ENCODE measurements at regions of chr16 and their contacts with region 1.

Region 1: GRCh38 chr16:75110637-75111513 is 5.7 kb downstream of the LDHD start:
- DNase-seq: peak; percentile 79 to 84 (median 80)
- H3K4me3 ChIP-seq: peak overlapping the region; percentile 5 to 39
- H3K4me3 Mint-ChIP-seq: peak overlapping the region; percentile 9 to 77 (median 61)
- H3K27ac ChIP-seq: peak overlapping the region; percentile 56
- H3K27ac Mint-ChIP-seq: peak overlapping the region; percentile 84 to 95 (median 92)
- H3K4me1 ChIP-seq: peaks cover 58% of the 10 kb centered on the region
- H3K4me1 Mint-ChIP-seq: peaks cover 32 to 62% (median 47%) of the 10 kb centered on the region in 4 donors
- H3K27me3 ChIP-seq: no peaks in the 10 kb centered on the region
- H3K27me3 Mint-ChIP-seq: peaks cover 0 to 1% of the 10 kb centered on the region in 2 donors

Region 2: DNA sequence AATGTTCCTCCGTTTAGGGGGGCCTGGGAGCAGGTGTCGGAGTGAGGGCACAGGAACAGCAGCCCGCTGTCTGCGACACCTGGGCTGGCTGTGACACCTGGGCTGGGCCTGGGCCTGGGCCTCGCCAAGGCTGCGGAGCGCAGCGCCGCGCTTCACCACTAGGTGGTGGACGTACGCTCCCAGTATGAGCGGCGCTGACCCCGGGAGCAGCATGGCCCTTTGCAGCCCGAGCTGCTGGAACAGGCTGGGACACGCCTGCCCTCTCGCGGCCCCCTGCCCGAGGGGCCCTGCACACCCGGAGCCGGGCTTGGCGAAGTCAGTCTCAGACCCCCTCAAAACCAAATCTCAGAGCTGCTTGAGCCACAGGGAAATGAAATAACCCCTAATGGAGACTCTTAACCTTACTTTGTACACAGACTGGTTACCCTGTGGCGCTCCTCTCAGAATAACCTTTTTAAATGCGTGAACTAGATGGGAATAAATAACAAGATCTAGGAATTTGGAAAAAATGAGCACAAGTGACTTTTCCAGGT is 297.7 kb before region 1 on chr16:
- CTCF ChIA-PET with region 1: interaction called, 35 read pairs
- POLR2A ChIA-PET with region 1: no interaction called
- intact Hi-C with region 1: no loop called
- DNase-seq: peak; percentile 51 to 72 (median 60)
- H3K4me3 ChIP-seq: no peak overlapping the region
- H3K4me3 Mint-ChIP-seq: peak overlapping the region in 3 of 8 donors; percentile 10 to 47 (median 46)
- H3K27ac ChIP-seq: no peak overlapping the region
- H3K27ac Mint-ChIP-seq: no peak overlapping the region
- H3K4me1 ChIP-seq: peaks cover 4% of the 10 kb centered on the region
- H3K4me1 Mint-ChIP-seq: no peaks in the 10 kb centered on the region
- H3K27me3 ChIP-seq: no peaks in the 10 kb centered on the region
- H3K27me3 Mint-ChIP-seq: peaks cover 2 to 4% of the 10 kb centered on the region in 2 donors

Region 3: GRCh38 chr16:74998481-74999218 is 112.2 kb before region 1 on chr16 and contains the start of gene ZNRF1:
- CTCF ChIA-PET with region 1: interaction called, 254 read pairs
- POLR2A ChIA-PET with region 1: interaction called, 88 read pairs
- intact Hi-C with region 1: loop called (anchors 1 kb)
- DNase-seq: peak; percentile 70 to 81 (median 74)
- H3K4me3 ChIP-seq: peak within 1 kb of the TSS in 1 of 2 donors; percentile 60
- H3K4me3 Mint-ChIP-seq: peak within 1 kb of the TSS; percentile 80 to 90 (median 88)
- H3K27ac ChIP-seq: peak within 1 kb of the TSS; percentile 49
- H3K27ac Mint-ChIP-seq: peak within 1 kb of the TSS; percentile 84 to 95 (median 91)
- H3K4me1 ChIP-seq: peaks cover 21% of the 10 kb centered on the region
- H3K4me1 Mint-ChIP-seq: peaks cover 8 to 22% (median 16%) of the 10 kb centered on the region in 4 donors
- H3K27me3 ChIP-seq: no peaks in the 10 kb centered on the region
- H3K27me3 Mint-ChIP-seq: peaks cover 0 to 2% of the 10 kb centered on the region in 2 donors
- total RNA-seq, gene ZNRF1: 6.0 to 6.2 TPM

Region 4: DNA sequence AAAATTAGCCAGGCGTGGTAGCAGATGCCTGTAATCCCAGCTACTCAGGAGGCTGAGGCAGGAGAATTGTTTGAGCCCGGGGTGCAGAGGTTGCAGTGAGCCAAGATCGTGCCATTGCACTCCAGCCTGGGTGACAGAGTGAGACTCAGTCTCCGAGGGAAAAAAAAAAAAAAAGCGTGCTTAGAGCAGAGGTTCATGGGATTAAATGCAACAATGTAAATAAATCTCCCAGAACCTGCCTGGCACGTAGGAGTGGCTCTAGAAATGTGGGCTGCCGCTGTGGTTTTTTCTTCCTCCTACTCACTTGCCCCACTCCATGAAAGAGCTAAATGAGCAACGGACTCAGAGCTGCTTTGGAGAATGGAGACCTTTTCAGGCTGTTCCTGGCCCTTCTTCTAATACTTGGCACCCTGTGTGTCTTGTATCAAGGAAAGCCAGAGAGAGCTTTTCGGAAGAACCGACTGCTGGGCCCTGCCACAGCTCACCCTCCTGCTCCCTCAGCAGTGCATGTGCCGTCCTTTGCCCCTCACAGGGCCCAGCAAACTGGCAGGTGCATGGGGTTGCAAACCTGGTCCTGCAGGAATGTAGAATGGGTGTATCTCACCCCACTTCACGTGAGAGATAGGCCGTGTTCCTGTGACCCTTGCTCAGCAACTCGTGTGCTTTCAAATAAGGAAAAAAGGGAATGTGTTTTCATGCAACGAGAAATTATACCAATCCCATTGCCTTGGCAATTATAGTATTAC is 46.3 kb before region 1 on chr16:
- CTCF ChIA-PET with region 1: interaction called, 31 read pairs
- POLR2A ChIA-PET with region 1: interaction called, 9 read pairs
- intact Hi-C with region 1: loop called (anchors 5 kb)
- DNase-seq: peak in 1 of 5 donors; percentile 4
- H3K4me3 ChIP-seq: peak overlapping the region in 1 of 2 donors; percentile 2
- H3K4me3 Mint-ChIP-seq: peak overlapping the region; percentile 46 to 76 (median 69)
- H3K27ac ChIP-seq: peak overlapping the region; percentile 6
- H3K27ac Mint-ChIP-seq: peak overlapping the region; percentile 72 to 94 (median 91)
- H3K4me1 ChIP-seq: peaks cover 33% of the 10 kb centered on the region
- H3K4me1 Mint-ChIP-seq: peaks cover 18 to 38% (median 28%) of the 10 kb centered on the region in 4 donors
- H3K27me3 ChIP-seq: no peaks in the 10 kb centered on the region
- H3K27me3 Mint-ChIP-seq: no peaks in the 10 kb centered on the region

Region 5: GRCh38 chr16:75087375-75087979 is 23.4 kb before region 1 on chr16:
- CTCF ChIA-PET with region 1: interaction called, 18 read pairs
- POLR2A ChIA-PET with region 1: interaction called, 3 read pairs
- intact Hi-C with region 1: no loop called
- DNase-seq: no peak
- H3K4me3 ChIP-seq: no peak overlapping the region
- H3K4me3 Mint-ChIP-seq: no peak overlapping the region
- H3K27ac ChIP-seq: no peak overlapping the region
- H3K27ac Mint-ChIP-seq: peak overlapping the region in 1 of 7 donors; percentile 22
- H3K4me1 ChIP-seq: no peaks in the 10 kb centered on the region
- H3K4me1 Mint-ChIP-seq: peaks cover 2 to 11% (median 3%) of the 10 kb centered on the region in 4 donors
- H3K27me3 ChIP-seq: no peaks in the 10 kb centered on the region
- H3K27me3 Mint-ChIP-seq: no peaks in the 10 kb centered on the region

Region 6: GRCh38 chr16:75160386-75160785 is 49.5 kb after region 1 on chr16:
- CTCF ChIA-PET with region 1: no interaction called
- POLR2A ChIA-PET with region 1: no interaction called
- intact Hi-C with region 1: no loop called
- DNase-seq: no peak
- H3K4me3 ChIP-seq: no peak overlapping the region
- H3K4me3 Mint-ChIP-seq: no peak overlapping the region
- H3K27ac ChIP-seq: no peak overlapping the region
- H3K27ac Mint-ChIP-seq: no peak overlapping the region
- H3K4me1 ChIP-seq: no peaks in the 10 kb centered on the region
- H3K4me1 Mint-ChIP-seq: peaks cover 0 to 12% (median 4%) of the 10 kb centered on the region in 4 donors
- H3K27me3 ChIP-seq: no peaks in the 10 kb centered on the region
- H3K27me3 Mint-ChIP-seq: no peaks in the 10 kb centered on the region

Region 7: DNA sequence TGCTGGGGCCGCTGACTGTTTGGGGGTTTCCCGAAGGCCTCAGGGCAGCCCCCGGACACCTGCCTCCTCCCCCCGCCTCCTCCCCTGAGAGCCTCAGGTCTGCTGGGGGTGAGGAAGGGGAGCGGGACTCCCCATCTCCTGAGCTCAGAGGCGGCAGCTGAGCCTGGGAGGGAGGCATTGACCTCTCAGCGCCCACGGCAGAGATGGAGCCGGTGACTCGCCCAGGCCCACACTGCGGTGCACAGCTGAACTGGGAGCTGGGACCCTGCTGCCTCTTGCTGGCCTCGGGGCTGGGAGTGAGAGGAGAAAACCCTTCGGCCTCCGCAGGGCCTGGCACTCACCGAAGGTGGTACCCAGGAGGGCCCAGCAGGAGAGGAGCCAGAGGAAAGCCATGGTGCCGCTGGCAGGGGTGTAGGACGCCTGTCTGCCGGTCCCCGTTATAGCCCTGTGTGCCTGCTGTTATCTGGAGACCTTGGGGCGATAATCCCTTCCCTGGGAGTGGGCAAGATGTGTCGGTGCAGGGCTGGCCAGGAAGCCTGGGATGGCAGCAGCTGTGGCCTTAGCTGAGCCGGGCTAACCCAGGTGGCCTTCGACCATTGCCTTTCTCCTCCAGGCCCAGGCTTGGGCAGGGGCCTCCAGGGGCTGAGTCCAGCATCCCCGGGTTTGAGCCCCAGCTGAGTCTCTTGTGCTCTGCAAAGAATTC is 96.0 kb after region 1 on chr16 and contains the start of gene CTRB2:
- CTCF ChIA-PET with region 1: no interaction called
- POLR2A ChIA-PET with region 1: no interaction called
- intact Hi-C with region 1: no loop called
- DNase-seq: no peak
- H3K4me3 ChIP-seq: no peak within 1 kb of the TSS
- H3K4me3 Mint-ChIP-seq: no peak within 1 kb of the TSS
- H3K27ac ChIP-seq: no peak within 1 kb of the TSS
- H3K27ac Mint-ChIP-seq: peak within 1 kb of the TSS in 1 of 7 donors; percentile 42
- H3K4me1 ChIP-seq: peaks cover 4% of the 10 kb centered on the region
- H3K4me1 Mint-ChIP-seq: peaks cover 2 to 3% (median 2%) of the 10 kb centered on the region in 4 donors
- H3K27me3 ChIP-seq: no peaks in the 10 kb centered on the region
- H3K27me3 Mint-ChIP-seq: peaks cover 0 to 1% of the 10 kb centered on the region in 2 donors
- total RNA-seq, gene CTRB2: not detected

Region 8: GRCh38 chr16:75238132-75238852 is 127.4 kb after region 1 on chr16:
- CTCF ChIA-PET with region 1: no interaction called
- POLR2A ChIA-PET with region 1: no interaction called
- intact Hi-C with region 1: no loop called
- DNase-seq: no peak
- H3K4me3 ChIP-seq: no peak overlapping the region
- H3K4me3 Mint-ChIP-seq: no peak overlapping the region
- H3K27ac ChIP-seq: no peak overlapping the region
- H3K27ac Mint-ChIP-seq: no peak overlapping the region
- H3K4me1 ChIP-seq: peaks cover 6% of the 10 kb centered on the region
- H3K4me1 Mint-ChIP-seq: peaks cover 0 to 5% (median 2%) of the 10 kb centered on the region in 4 donors
- H3K27me3 ChIP-seq: no peaks in the 10 kb centered on the region
- H3K27me3 Mint-ChIP-seq: no peaks in the 10 kb centered on the region

Measured in CD4-positive, alpha-beta memory T cell (primary cell).